Right ventricle myocardium inferior (tissue), 1 donor: ENCODE measurements at regions of chr1 and their contacts with region 1.

Region 1: GRCh38 chr1:175192630-175193526 is at the start of gene KIAA0040:
- DNase-seq: peak; percentile 90
- ATAC-seq: peak; percentile 91
- total RNA-seq, gene KIAA0040: 22.8 TPM

Region 2: DNA sequence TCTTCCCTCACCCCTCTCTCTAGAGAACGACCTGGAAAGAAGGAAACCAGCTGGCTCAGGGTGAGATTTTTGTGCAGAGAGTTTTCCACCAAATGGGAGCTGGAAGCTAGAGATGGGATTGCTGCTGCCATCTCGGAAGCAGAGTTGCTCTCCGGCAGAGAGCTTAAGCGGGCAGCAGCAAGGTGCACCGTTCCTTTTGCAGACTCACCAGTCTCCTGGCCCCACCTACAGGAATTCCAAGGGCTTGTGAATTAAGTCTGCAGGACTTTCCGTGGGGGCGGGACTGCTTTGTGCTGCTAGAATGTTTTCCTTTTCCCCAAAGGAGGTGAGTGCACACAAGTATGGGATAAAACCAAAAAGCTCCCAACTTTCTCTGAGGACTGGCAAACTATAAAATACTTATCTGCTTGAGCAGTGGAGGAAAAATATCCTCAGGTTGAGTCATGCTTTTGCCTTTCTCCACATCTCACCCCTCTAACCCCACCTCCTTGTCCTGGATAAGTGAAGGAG is 28.8 kb after region 1 on chr1:
- intact Hi-C with region 1: loop called (anchors 2 kb)
- DNase-seq: no peak
- ATAC-seq: peak; percentile 48